Activated CD4-positive, alpha-beta T cell treated with anti-CD3 and anti-CD28 coated beads, Interleukin-2, amount 10 ng/mL, durations not matched to agents 24 days and 14 days (primary cell): ENCODE measurements at regions of chr17 and their contacts with region 1.

Region 1: DNA sequence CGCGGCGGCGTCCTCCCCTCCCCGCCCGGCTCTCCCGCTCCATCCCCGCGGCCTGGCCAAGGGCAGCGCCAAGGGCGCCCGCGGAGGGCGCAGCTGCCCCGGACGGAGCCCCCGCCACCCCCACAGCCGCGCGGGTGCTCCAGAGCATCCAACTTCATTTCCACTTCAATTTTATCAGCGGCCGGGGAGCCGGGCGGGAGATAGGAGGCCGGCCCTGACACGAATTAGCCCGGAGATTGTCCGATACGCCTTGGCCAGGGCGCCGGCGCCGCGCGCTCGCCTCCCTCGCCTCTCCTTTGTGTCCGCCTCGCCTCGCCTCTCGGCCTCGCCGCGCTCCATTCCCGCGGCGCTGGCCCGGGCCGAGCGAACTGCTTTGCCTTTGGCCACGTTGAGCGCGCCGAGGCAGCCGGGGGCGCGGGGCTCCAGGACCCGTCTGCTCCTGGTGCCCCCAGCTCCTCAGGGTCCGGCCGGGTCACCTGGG is 129.1 kb upstream of the LHX1 start:
- DNase-seq: no peak
- H3K4me3 Mint-ChIP-seq: no peak overlapping the region
- H3K27ac Mint-ChIP-seq: no peak overlapping the region
- H3K4me1 Mint-ChIP-seq: no peaks in the 10 kb centered on the region
- H3K27me3 Mint-ChIP-seq: peaks cover 63% of the 10 kb centered on the region

Region 2: GRCh38 chr17:36934692-36935630 is 126.7 kb after region 1 on chr17:
- intact Hi-C with region 1: loop called (anchors 2 kb)
- DNase-seq: peak; percentile 74
- H3K4me3 Mint-ChIP-seq: peak overlapping the region; percentile 64
- H3K27ac Mint-ChIP-seq: peak overlapping the region; percentile 70
- H3K4me1 Mint-ChIP-seq: peaks cover 44% of the 10 kb centered on the region
- H3K27me3 Mint-ChIP-seq: peaks cover 85% of the 10 kb centered on the region